ENCODE measurements at regions of chr7 and their contacts with region 1.

Region 1: DNA sequence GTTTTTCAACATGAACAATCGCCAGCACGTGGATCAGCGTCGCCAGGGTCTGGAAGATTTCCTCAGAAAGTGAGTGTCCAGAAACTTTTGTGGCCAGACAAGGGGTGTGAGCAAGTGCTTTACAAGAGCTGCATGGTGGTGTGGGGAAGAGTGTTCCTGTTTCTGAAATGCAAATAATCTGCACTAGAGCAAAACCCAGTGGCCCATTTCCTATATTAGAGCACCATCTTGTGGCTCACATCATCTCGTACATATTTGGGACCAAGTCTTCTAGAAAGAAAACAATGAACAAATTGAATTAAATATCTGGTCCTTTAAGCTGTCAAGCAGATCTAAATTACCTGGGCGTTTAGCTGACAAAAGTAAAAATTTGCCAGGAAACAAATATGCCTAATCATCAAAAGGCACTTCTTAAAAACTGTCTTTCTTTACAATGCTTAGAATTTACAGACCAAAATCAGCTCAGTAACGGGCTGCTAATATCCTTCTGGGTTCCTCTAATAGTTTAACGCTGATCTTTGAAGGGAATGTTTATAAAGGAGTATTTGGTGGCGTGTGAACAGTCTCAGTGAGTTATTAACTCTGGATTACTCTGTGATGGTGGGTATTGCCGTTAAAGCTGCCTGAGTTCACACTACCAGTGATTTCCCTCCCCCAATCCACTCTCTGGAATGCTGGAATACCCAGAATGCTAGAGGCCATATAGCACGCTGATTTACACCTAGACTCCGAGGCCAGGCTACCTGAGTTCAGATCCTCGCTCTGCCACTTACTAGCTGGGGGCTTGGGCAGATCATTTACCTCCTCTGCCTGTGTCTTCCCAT is 73.6 kb downstream of the SNX10 start:
- DNase-seq: peak; percentile 67
- H3K4me3 ChIP-seq: no peak overlapping the region
- H3K27ac ChIP-seq: no peak overlapping the region
- H3K4me1 ChIP-seq: peaks cover 8% of the 10 kb centered on the region
- H3K27me3 ChIP-seq: no peaks in the 10 kb centered on the region
- CTCF ChIP-seq: peak; percentile 40 to 93 (median 83)
- POLR2A ChIP-seq: no peak

Region 2: GRCh38 chr7:25894902-25895791 is 470.1 kb before region 1 on chr7:
- intact Hi-C with region 1: loop called (anchors 2 kb)
- DNase-seq: peak; percentile 35
- H3K4me3 ChIP-seq: no peak overlapping the region
- H3K27ac ChIP-seq: no peak overlapping the region
- H3K4me1 ChIP-seq: no peaks in the 10 kb centered on the region
- H3K27me3 ChIP-seq: peaks cover 2% of the 10 kb centered on the region
- CTCF ChIP-seq: peak in 3 of 4 experiments; percentile 37 to 50 (median 43)
- POLR2A ChIP-seq: no peak

Region 3: GRCh38 chr7:26090927-26091519 is 274.3 kb before region 1 on chr7:
- intact Hi-C with region 1: loop called (anchors 5 kb)
- DNase-seq: peak; percentile 18
- H3K4me3 ChIP-seq: no peak overlapping the region
- H3K27ac ChIP-seq: no peak overlapping the region
- H3K4me1 ChIP-seq: no peaks in the 10 kb centered on the region
- H3K27me3 ChIP-seq: no peaks in the 10 kb centered on the region
- CTCF ChIP-seq: peak in 3 of 4 experiments; percentile 45 to 66 (median 61)
- POLR2A ChIP-seq: no peak

Region 4: DNA sequence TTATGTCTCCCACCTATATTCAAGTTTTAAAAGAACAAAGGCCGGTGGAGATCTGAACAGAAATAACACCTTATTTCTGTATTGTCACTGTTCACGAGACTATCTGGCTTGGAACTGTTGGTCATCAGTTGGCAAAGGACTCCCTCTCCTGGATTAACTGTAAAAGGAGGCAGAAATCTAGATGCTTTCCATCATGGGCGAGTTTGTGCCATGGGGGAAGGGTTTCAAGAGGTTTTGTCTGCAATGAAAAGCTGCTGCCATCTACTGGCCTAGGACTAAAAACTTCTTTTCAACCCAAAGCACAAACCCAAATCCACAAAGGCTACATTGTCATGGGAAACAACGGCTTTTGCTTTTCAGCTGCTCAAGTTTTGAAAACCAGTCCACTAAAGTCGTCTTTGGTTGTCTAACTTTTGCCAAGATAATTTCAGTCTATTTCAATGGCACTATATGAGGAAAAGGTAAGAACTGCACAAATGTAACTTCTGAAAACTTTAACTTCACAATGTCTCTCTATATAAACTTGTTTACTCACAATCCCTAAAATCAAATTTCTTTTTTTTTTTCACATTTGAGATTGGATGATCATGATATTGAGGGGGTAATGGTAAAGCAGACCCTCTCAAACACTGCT is 302.3 kb after region 1 on chr7:
- intact Hi-C with region 1: loop called (anchors 2 kb)
- DNase-seq: peak; percentile 75
- H3K4me3 ChIP-seq: no peak overlapping the region
- H3K27ac ChIP-seq: no peak overlapping the region
- H3K4me1 ChIP-seq: no peaks in the 10 kb centered on the region
- H3K27me3 ChIP-seq: no peaks in the 10 kb centered on the region
- CTCF ChIP-seq: peak in 3 of 4 experiments; percentile 84 to 88 (median 86)
- POLR2A ChIP-seq: no peak

Region 5: DNA sequence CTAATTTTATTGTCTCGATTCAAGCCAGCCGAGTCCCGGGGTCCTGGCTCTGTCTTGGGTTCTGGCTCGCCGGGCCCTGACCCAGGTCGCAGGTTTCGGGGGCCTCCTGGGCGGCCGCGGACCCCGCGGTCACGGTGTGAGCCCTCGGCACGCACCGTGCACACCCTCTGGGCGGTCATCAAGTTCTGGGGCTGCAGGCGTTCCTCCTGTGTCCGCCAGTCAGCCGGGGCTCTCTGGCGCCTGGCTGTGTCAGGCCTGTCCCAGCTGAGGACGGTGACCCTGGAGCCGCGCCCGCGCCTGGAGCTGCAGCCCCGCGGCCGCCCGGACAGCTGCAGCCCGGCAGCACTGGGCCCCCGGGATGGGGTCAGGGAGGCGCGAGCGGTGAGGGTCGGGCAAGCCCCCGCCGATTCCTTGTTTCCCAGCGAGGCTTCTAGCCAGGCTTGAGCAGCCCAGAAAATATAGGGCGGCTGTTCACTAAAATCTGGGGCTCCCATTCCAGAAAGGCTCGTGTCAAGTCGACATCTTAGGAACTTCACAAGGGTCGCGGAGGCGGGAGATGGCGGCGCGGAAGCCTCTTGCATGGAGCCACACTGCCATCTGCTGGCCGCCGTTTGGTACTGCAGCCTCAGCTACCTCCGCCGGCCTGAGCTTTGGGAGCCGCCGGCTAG is 795.4 kb after region 1 on chr7:
- intact Hi-C with region 1: loop called (anchors 2 kb)
- DNase-seq: peak; percentile 90
- H3K4me3 ChIP-seq: peak overlapping the region; percentile 61 to 80
- H3K27ac ChIP-seq: peak overlapping the region; percentile 73 to 96
- H3K4me1 ChIP-seq: peaks cover under 1% of the 10 kb centered on the region
- H3K27me3 ChIP-seq: no peaks in the 10 kb centered on the region
- CTCF ChIP-seq: peak; percentile 98 to 100 (median 100)
- POLR2A ChIP-seq: peak; percentile 8

Measured in prostate gland (tissue), 2 donors.